ENCODE measurements at regions of chr19 and their contacts with region 1.

Region 1: GRCh38 chr19:43519436-43520088 is 7.4 kb downstream of the ETHE1 start:
- DNase-seq: peak; percentile 81 to 92
- ATAC-seq: peak; percentile 87 to 88
- H3K4me3 ChIP-seq: no peak overlapping the region
- H3K27ac ChIP-seq: no peak overlapping the region
- H3K4me1 ChIP-seq: peaks cover 16% of the 10 kb centered on the region; the same call in 2 of the 3 replicates
- CTCF ChIP-seq: peak; percentile 99
- EP300 ChIP-seq: no peak
- POLR2A ChIP-seq: no peak
- RAD21 ChIP-seq: peak; percentile 97 to 98

Region 2: DNA sequence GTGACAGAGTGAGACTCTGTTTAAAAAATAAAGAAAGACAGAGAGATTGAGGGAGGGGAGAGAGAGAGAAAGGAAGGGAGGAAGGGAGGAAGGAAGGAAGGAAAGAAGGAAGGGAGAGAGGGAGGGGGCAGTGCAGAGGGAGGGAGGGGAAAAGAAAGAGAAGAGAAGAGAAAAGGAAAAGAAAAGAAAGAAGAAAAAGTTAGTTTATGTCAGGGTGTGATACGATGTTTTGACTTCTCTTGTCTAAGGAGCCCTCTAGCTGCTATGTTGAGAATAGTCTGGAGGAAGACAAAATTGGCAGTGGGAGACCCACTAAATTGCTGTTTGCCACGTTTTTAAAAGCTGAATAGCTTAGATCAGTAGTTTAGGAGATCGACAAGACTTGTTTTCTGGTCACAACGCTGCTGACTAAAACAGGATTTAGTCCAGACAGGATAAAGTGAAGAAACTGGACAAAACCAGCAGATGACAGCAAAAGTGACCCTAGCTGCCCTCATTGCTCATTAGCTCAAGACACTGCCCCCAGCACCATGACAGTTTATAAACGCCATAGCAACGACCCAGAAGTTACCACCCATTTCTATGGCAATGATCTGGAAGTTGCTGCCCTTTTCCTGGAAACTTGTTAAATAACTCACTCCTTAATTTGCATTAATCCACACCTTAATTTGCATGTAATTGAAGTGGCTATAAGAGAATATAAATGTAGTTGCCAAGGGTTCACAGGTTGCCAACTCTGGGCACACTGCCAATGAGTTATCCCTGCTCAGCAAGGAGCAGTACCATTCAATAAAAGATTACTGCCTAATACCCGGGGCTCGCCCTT is 93.8 kb before region 1 on chr19:
- CTCF ChIA-PET with region 1: interaction called, 72 read pairs
- POLR2A ChIA-PET with region 1: no interaction called
- DNase-seq: peak in 1 of 2 experiments; percentile 35
- ATAC-seq: peak; percentile 89 to 92; a peak in 5 of 6 replicates
- H3K4me3 ChIP-seq: no peak overlapping the region
- H3K27ac ChIP-seq: no peak overlapping the region
- H3K4me1 ChIP-seq: no peaks in the 10 kb centered on the region
- CTCF ChIP-seq: peak; percentile 79
- EP300 ChIP-seq: no peak
- POLR2A ChIP-seq: no peak
- RAD21 ChIP-seq: peak; percentile 69 to 70

Region 3: GRCh38 chr19:43457809-43458208 is 61.8 kb before region 1 on chr19:
- CTCF ChIA-PET with region 1: interaction called, 24 read pairs
- POLR2A ChIA-PET with region 1: no interaction called
- DNase-seq: no peak
- ATAC-seq: no peak
- H3K4me3 ChIP-seq: no peak overlapping the region
- H3K27ac ChIP-seq: no peak overlapping the region
- H3K4me1 ChIP-seq: no peaks in the 10 kb centered on the region
- CTCF ChIP-seq: no peak
- EP300 ChIP-seq: no peak
- POLR2A ChIP-seq: no peak
- RAD21 ChIP-seq: no peak

Region 4: GRCh38 chr19:43482193-43482592 is 37.4 kb before region 1 on chr19:
- CTCF ChIA-PET with region 1: interaction called, 37 read pairs
- POLR2A ChIA-PET with region 1: no interaction called
- DNase-seq: no peak
- ATAC-seq: no peak; a peak in 2 of 6 replicates
- H3K4me3 ChIP-seq: no peak overlapping the region
- H3K27ac ChIP-seq: no peak overlapping the region
- H3K4me1 ChIP-seq: no peaks in the 10 kb centered on the region
- CTCF ChIP-seq: no peak
- EP300 ChIP-seq: no peak
- POLR2A ChIP-seq: no peak
- RAD21 ChIP-seq: no peak

Region 5: DNA sequence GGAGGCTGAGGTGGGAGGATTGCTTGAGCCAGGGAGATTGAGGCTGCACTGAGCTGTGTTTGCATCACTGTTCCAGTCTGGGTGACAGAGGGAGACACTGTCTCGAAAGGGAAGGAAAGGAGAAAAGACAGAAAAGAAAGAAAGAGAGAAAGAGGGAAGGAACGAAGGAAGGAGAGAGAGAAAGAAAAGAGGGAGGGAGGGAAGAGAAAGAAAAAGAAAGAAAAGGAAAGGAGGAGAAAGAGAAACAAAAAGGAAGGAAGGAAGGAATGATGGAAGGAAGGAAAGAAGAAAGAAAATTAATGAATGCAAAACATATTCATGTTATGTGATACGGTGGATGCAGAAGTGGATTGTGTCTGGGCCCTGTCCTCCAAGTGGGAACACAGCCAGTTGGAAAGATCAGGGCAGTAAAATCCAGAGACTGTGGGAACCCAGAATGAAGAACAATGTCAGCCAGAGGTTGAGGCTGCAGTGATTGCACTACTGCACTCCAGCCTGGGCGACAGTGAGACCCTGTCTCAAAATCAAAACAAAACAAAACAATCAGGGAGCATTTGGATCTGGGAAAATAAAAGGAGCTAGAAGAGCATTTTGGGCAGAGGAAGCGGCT is 21.2 kb before region 1 on chr19:
- CTCF ChIA-PET with region 1: interaction called, 84 read pairs
- POLR2A ChIA-PET with region 1: interaction called, 5 read pairs
- DNase-seq: no peak
- ATAC-seq: no peak
- H3K4me3 ChIP-seq: no peak overlapping the region
- H3K27ac ChIP-seq: no peak overlapping the region
- H3K4me1 ChIP-seq: peaks cover 4% of the 10 kb centered on the region; the same call in 1 of the 3 replicates
- CTCF ChIP-seq: no peak
- EP300 ChIP-seq: no peak
- POLR2A ChIP-seq: no peak
- RAD21 ChIP-seq: no peak

Region 6: DNA sequence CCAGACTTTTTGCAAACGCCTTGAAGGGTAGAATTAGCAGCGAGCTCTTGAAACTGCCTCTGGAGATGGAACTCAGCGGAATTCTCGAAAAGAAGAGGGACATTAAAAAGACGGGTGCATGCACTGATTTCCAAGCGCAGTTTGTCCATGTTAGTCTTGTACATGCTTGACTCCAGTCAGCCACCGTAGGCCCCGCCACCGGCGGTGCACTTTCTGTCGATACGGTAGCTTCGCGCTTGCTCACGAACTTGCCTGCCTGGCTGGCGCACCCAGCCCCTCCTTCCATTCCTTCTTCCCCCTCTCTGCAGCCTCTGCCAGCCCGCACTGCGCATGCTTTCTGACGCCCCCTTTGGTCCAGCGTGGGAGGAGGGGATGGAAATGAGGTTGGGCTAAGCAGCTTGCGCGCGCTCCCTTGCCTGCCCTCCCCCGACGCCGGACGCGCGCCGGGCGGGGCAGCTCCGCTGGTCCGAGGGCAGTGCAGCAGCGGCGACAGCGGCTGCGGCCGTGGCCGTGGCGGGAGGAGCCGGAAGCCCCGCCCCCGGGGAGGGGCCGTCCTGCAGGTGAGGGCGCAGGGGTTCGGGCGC is 13.5 kb after region 1 on chr19 and contains the start of gene ZNF575:
- CTCF ChIA-PET with region 1: interaction called, 85 read pairs
- POLR2A ChIA-PET with region 1: interaction called, 8 read pairs
- DNase-seq: peak; percentile 95 to 99
- ATAC-seq: peak; percentile 70 to 83
- H3K4me3 ChIP-seq: peak within 1 kb of the TSS; percentile 57
- H3K27ac ChIP-seq: peak within 1 kb of the TSS; percentile 90 to 93
- H3K4me1 ChIP-seq: peaks cover 14% of the 10 kb centered on the region
- CTCF ChIP-seq: no peak
- EP300 ChIP-seq: no peak
- POLR2A ChIP-seq: peak; percentile 79
- RAD21 ChIP-seq: no peak
- polyA plus RNA-seq, gene ZNF575: 0.09 and 0.38 TPM in 2 replicates

Region 7: DNA sequence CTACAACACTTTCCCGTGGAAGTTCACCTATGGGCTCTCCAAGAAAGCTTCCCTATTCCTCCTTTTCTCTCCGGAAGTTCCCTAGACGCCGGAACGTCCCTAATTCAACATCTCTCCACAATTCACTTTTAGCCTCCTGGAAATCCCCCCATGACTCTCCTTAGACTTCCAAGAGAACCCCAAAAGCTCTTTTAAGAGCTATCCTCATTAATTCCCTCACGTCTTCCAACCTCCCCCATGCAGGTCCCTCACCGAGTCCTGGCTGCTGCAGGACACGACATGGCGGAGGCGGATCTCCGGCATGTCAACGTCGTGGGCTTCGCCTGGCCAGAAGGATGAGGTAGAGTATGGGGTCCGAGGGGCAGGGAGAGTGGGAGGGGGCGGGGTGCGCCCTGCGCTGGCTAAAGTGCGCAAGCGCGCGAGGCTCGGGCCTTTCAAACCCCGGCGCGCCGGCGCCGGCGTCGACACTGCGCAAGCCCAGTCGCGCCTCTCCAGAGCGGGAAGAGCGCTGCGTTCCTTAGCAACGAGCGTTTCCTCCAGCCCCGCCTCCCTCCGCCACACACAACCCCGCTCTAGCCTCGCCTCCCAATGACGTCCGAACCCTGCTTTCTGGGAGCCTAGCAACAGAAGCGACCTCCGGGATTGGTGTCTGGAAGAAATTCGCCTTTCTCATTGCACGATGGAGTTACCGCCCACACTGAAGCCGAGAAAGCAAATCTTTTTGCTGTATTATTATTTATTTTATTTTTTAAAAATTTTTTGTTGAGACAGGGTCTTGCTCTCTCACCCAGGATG is 55.8 kb after region 1 on chr19 and contains the starts of genes PINLYP and XRCC1:
- CTCF ChIA-PET with region 1: no interaction called
- POLR2A ChIA-PET with region 1: no interaction called
- DNase-seq: peak; percentile 99 to 100
- ATAC-seq: peak; percentile 98 to 99
- H3K4me3 ChIP-seq: peak within 1 kb of the TSS; percentile 84
- H3K27ac ChIP-seq: peak within 1 kb of the TSS; percentile 91
- H3K4me1 ChIP-seq: peaks cover 11% of the 10 kb centered on the region
- CTCF ChIP-seq: no peak
- EP300 ChIP-seq: no peak
- POLR2A ChIP-seq: peak; percentile 52
- RAD21 ChIP-seq: no peak
- polyA plus RNA-seq, gene PINLYP: 0.12 TPM in 1 of 2 replicates, not detected in the other
- polyA plus RNA-seq, gene XRCC1: 31.9 and 32.0 TPM in 2 replicates

Measured in A549 (cell line).